PC-9 (cell line): ENCODE measurements at regions of chr12 and their contacts with region 1.

Region 1: DNA sequence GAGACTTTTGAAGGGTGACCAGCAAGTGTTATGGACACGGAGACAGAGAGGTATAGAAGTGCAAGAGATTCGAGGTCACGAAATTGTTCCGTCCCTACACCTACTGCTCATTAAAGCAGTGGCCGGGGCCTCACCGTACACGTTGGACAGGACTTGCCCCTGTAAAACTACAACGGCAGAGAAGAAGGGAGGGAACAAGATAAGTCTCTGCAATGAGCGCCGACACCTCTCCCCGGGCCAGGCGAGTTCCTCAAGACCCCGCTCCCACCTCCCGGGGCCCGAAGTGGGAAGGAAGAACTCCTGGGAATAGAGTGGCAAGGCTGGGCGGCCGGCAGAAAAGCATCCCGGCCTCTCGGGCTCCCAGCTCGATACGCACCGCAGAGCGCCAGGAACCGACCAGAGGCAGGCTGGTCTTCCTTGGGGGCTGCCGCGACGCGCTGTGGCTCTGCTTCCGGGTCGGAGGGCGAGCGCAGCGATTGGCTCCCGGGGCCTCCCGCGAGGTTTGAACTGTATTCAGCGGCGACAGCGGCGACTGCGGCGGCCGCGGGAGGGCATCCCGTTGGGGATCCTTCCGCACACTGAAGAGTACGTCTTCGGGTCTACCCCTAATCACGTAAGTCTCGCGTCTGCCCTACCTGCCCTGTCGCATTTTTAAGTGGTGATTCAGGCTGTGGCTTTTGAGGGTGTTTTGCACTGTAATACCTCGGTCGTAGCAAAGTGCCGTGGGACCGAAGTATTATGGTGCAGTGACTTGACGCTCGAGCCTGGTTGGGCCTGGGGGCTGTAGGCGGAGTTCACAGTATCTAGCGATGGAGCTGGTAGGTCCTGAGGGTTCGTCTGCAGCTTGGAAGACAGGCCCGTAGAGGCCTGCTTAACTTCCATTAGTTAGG is at the starts of genes NUP37 and PARPBP:
- DNase-seq: peak; percentile 92 to 96
- H3K4me3 ChIP-seq: peak within 1 kb of the TSS; percentile 93
- H3K27ac ChIP-seq: peak within 1 kb of the TSS; percentile 92
- H3K4me1 ChIP-seq: peaks cover 23% of the 10 kb centered on the region
- H3K27me3 ChIP-seq: no peaks in the 10 kb centered on the region
- CTCF ChIP-seq: no peak
- total RNA-seq, gene NUP37: 48.2 and 72.4 TPM in 2 replicates
- total RNA-seq, gene PARPBP: 12.8 and 16.2 TPM in 2 replicates

Region 2: DNA sequence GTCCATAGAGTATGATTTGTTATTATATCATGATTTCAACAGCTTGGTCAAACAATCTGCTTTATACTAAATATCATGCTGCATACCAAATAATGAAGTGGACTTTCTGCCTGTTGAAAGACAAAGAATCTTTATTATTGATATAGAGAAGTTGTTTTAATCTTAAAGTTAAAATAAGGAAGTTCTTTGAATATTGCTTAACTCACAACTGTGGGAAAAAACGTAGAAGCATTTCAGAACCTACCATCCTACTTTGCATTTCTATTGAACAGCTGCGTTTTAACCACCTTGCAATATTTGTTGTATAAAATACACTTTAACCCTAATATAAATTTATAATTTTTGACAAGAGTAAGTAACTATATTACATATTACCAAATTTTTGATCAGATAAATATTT is 689.5 kb before region 1 on chr12:
- CTCF ChIA-PET with region 1: interaction called, 10 read pairs
- POLR2A ChIA-PET with region 1: no interaction called
- intact Hi-C with region 1: no loop called
- DNase-seq: no peak
- H3K4me3 ChIP-seq: no peak overlapping the region
- H3K27ac ChIP-seq: no peak overlapping the region
- H3K4me1 ChIP-seq: no peaks in the 10 kb centered on the region
- H3K27me3 ChIP-seq: no peaks in the 10 kb centered on the region
- CTCF ChIP-seq: no peak

Region 3: DNA sequence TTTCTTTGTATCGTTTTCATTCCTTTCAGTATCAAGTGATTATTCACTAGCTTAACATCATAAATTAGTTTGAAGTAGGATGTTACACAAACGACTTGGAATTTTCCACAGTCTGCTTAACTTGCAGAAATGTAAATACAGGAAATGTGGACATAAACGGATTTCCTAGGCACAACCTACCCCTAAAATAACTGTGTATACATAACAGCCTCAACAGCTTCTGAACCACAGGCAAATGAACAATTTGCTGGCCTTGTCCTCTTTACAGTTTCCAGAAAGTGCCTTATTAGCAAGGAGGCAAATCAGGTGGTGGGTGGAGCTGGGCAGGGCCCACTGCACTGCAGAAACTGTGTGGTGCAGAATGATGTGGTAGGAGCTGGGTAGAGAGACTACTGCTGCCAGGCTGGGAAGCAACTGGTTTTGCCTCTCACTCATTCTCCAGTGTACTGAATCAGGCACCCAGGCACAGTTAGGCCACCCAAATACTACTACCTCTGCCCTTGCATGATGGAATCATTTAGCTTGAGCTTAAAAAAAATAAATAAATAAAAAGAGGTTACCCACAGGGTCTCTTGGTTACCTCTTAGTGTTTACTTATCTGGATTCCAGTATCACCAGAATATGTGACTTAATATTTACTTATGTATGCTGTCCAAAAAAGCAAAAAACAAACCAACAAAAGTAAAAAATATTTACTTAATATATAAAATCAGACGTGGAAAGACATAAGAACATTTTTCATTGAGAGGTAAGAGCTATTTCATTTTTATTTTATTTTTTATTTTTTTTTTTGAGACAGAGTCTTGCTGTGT is 228.3 kb before region 1 on chr12:
- CTCF ChIA-PET with region 1: interaction called, 3 read pairs
- POLR2A ChIA-PET with region 1: no interaction called
- intact Hi-C with region 1: loop called (anchors 5 kb)
- DNase-seq: peak; percentile 10 to 61
- H3K4me3 ChIP-seq: 0 out of 2 replicates have a peak overlapping the region, but pooled peaks have one; percentile 6
- H3K27ac ChIP-seq: peak overlapping the region; percentile 67
- H3K4me1 ChIP-seq: peaks cover 42% of the 10 kb centered on the region
- H3K27me3 ChIP-seq: no peaks in the 10 kb centered on the region
- CTCF ChIP-seq: no peak